Cardiac septum (tissue), 1 donor: ENCODE measurements at regions of chr20 and their contacts with region 1.

Region 1: DNA sequence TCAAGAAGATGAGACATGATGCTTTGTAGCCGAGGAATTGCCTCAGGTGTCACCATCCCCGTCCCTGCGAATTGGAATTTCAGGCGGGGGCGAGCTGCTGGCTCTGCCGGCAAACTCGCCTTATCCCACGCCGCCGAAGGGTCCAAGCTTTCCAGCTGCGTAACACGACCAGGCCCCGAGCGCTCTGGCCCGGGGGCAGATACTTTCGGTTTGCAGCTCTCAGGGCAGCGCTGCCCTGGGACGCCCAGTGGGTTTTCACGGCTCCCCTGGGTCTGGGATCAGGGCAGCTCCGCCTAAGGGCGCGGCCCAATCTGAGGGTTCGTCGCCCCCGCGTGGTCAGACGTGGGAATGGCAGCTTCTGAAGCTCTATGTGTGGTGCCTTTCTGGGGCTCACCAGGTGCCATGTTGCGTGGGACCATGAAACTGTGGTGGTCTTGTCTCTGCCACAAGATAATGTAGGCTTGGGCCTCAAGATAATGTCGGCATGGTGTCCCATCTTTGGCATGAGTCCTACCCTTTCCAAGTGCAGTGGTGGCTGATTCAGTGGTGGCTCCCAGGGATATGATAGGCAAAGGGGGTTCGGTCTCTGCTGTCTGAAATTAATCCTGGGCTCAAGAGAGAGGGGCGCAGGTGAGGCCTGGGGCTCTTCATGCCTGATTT is 20.9 kb downstream of the PIGT start:
- DNase-seq: peak; percentile 94

Region 2: GRCh38 chr20:45322952-45323383 is 113.9 kb before region 1 on chr20:
- intact Hi-C with region 1: loop called (anchors 2 kb)
- DNase-seq: no peak

Region 3: GRCh38 chr20:45362804-45363610 is 73.9 kb before region 1 on chr20 and contains the start of gene SYS1:
- intact Hi-C with region 1: loop called (anchors 2 kb)
- DNase-seq: peak; percentile 99
- total RNA-seq, gene SYS1: 17.4 TPM

Region 4: GRCh38 chr20:45373353-45374100 is 63.3 kb before region 1 on chr20:
- intact Hi-C with region 1: loop called (anchors 2 kb)
- DNase-seq: peak; percentile 95

Region 5: DNA sequence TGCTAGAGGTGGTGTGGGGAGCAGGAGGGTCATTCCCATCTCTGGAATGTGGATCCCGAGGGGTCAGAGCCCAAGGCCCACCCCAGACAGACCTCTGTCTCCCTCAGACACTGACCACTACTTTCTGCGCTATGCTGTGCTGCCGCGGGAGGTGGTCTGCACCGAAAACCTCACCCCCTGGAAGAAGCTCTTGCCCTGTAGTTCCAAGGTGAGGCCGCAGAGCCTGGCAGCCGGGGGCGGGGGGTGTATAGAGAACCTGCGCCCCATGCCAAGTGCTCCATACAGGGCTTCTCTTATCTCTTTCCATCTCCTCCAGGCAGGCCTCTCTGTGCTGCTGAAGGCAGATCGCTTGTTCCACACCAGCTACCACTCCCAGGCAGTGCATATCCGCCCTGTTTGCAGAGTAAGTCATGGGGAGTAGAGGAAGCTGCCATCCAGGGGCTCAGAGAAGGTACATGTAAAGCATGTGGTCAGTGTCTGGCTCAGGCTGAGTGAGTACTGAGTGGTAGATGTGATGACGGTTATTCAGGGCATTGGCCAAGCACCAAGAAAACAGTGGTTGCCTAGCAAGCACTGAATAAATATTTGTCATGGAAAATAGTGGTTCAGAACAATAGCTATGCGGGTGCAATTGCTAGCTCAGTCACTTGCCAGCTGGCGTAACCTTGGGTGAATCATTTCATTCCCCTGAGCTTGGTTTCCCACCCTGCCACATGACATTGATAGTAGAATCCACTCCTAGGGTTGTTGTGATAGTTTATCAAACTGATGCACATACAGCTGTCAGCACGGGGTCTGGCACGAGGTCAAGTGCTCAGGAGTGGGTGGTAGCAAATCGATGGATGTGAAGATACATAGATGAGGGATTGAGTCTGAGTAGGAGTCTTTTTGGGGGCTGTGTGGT is 17.4 kb before region 1 on chr20:
- intact Hi-C with region 1: loop called (anchors 1 kb)
- DNase-seq: peak; percentile 82